Activated CD4-positive, alpha-beta T cell treated with anti-CD3 and anti-CD28 coated beads for 36 hours (primary cell): ENCODE measurements at regions of chr6 and their contacts with region 1.

Region 1: DNA sequence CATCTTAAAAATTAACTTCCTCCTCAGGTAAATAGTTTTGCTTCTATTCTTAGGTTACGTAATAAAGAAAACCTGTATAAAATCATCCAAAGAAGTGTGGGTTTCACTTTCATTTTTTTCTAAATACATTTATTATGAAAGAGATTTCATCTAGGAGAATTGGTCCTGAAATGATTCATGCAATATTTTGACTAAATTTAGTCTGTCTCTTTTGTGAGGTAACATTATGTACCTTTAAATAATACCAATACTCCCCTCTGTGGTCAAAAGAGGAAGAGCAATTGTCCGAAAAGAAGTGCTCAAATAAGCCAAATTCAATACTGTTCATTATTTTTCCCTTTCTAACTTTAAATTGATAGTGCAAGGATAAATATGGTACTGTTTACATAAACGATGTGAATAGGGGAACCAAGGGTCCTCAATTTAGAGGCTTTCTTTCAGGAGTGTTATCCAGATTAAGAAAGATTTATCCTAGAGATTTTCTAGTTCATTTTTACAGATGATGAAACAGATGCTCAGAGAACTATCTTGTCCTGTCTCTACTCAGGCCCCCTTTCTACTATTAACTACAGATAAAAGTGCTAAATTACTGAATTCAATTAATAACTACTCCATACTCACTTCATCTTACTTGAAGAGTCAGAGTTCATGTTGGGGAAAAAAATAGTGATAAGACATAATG is 26.2 kb downstream of the CYP39A1 start:
- DNase-seq: no peak
- ATAC-seq: peak; percentile 75
- H3K4me3 Mint-ChIP-seq: no peak overlapping the region
- H3K27ac Mint-ChIP-seq: no peak overlapping the region
- H3K4me1 Mint-ChIP-seq: peaks cover 4% of the 10 kb centered on the region
- H3K27me3 Mint-ChIP-seq: peaks cover 21% of the 10 kb centered on the region

Region 2: GRCh38 chr6:46605091-46605797 is 21.1 kb before region 1 on chr6:
- CTCF ChIA-PET with region 1: no interaction called
- POLR2A ChIA-PET with region 1: no interaction called
- intact Hi-C with region 1: no loop called
- DNase-seq: no peak
- ATAC-seq: no peak
- H3K4me3 Mint-ChIP-seq: no peak overlapping the region
- H3K27ac Mint-ChIP-seq: no peak overlapping the region
- H3K4me1 Mint-ChIP-seq: no peaks in the 10 kb centered on the region
- H3K27me3 Mint-ChIP-seq: peaks cover 13% of the 10 kb centered on the region

Region 3: DNA sequence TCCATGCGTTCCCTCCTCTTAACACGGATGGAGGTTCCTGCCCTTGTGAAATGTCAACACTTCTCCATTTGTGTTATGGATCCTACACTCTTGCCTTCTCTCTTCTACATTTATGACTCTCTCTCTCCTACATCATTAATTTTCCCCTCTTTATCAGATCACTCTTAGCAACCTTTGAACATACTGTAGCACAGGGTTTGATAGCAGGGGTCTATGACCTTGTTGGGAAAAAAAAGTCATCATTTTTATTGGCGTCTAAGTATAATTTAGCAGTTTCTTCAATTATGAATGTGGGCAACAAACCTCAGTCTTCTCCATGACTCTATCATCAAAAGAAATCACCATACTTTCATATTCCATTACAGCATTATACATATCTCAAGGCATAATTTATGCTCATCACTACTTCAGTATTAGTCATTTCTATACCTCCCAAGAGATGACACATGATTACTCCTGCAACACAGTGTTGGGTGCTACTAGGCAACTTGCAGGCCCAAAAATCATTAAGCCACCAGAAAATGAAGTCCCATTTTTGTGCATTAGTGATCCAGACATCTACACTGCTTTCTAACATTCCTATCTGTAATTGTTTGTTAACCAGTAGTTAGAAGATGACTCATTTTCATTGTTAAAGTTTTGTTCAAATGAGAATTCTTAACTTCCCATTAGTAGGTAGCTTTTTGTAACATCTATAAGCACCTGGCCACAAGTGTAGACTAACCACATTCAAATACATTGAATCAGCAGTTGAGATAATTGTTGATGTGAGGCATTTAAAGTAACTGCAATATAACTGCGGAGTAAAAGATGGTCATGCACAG is 16.8 kb after region 1 on chr6:
- CTCF ChIA-PET with region 1: interaction called, 3 read pairs
- POLR2A ChIA-PET with region 1: no interaction called
- intact Hi-C with region 1: loop called in 1 of 2 experiments (anchors 1 kb)
- DNase-seq: peak; percentile 12
- ATAC-seq: peak; percentile 99
- H3K4me3 Mint-ChIP-seq: no peak overlapping the region
- H3K27ac Mint-ChIP-seq: no peak overlapping the region
- H3K4me1 Mint-ChIP-seq: peaks cover 15% of the 10 kb centered on the region
- H3K27me3 Mint-ChIP-seq: peaks cover 25% of the 10 kb centered on the region